Dendritic cell treated with granulocyte-macrophage colony-stimulating factor and Interleukin-4, amounts not matched to agents 40 ng/mL and 50 ng/mL, for 4 days (primary cell): ENCODE measurements at regions of chr5 and their contacts with region 1.

Region 1: DNA sequence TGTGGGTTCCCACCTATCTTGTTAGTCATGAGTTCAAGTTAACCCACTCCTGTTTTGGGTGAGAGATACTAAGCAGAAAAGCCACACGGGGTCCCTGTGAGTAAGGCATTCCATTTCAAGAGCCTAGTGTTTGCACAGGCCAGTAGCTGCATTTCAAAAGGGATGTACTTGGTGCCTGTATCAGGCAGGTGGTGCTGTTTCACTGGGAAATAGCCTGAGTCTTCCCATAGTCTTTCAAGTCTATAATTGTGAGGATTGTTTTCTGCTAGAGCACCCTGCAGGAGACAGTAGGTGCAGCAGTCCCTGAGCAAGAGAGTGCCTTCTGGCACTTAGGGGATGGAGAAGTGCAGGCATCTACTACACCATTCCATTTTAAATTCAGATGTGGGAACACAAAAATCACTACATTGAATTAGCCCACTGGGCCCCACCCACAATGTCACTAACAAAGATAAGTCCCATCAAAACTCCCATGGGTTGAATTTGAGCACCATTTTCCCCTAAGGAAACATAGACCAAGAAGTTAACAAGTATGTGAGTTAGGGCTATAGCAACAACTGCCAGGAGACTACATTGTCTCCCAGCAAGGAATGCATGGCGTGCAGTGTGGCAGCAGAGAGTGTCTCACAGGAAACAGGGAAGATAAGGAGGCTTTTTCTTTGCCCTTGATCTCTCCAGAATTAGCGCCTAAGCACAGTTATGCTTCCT is 263.2 kb downstream of the COX7C start:
- H3K4me3 Mint-ChIP-seq: no peak overlapping the region
- H3K27ac Mint-ChIP-seq: no peak overlapping the region
- H3K4me1 Mint-ChIP-seq: no peaks in the 10 kb centered on the region
- H3K27me3 Mint-ChIP-seq: no peaks in the 10 kb centered on the region

Region 2: DNA sequence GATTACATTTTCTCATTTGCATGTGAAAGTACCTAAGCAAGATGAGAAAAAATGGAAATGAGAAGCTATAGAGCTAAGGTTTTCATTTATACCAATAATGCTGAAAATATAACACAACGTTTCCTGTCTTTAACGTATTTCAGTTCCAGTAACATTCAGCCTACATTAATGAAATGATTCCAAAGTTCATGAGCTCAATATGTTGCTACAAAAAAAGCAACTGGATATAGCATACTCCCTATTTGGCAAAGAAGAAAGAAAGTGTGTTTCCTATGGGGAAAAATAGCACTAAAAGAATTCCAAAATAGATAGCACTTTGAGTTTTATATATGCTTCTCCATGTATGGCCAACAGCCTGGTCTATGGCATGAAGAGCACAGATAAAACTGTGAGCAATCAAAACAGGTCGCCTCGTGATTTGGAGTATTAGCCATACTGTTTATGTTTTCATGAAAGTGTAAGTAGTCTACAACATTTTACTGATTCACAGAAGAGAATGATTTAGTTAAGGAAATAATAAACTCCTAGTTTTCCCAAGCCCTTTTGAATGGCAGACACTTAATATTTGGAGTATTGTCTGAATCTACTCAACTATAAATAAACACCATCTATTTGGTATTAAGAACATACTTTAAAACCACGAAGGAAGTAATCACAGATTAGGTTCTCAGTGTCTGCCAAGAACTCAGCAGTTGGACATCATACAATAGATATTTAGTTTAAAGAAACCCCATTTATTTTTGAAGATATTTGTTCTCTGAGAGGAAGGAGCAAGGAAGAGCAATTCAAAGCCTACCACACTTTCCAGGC is 128.0 kb after region 1 on chr5:
- intact Hi-C with region 1: loop called (anchors 2 kb)
- H3K4me3 Mint-ChIP-seq: no peak overlapping the region
- H3K27ac Mint-ChIP-seq: no peak overlapping the region
- H3K4me1 Mint-ChIP-seq: peaks cover 5% of the 10 kb centered on the region
- H3K27me3 Mint-ChIP-seq: no peaks in the 10 kb centered on the region